Heart left ventricle (tissue), 16 donors: ENCODE measurements at regions of chr3 and their contacts with region 1.

Region 1: DNA sequence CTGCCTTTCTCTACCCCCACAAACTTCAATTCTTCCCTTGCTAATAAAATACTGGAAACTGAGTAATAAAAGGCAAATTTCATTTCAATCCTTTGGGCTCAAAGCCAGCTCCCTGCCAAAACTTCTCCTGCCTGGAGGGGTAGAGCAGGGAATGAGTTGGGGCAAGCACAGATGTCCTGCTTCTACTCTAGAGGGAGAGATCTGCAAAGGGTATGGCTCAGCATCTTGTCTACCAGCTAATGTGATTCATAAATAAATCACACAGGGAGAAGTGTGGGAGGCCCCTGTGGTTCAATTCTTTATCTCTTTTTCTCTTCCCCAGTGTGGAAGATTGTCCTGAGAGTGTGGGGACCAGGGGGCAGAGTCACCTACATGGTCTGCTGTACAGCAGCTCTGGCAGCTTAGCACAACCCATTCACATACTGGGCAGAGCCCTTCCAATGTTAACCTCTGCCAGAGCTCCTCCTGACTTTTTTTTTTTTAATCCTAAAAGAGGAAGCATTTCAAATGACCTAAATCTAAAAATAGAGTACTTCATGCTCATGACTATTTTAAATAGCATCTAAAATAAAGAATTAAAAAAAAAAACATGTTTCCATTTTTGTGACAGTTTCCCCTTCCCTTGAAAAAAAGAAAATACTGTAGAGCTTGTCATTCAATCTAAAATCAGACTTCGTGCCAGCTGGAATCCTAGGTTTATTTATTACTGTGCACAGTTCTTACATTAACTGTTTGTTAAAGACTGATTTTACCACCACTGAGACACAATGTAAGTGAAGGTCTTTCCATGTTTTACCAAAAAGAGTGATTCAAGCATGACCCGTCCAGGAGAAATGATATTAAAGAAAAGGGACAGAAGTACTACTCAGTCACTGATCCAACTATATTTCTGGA is 1083.7 kb upstream of the CFAP20DC start:
- DNase-seq: peak in 2 of 5 donors; percentile 13 to 24
- ATAC-seq: peak; percentile 72 to 91 (median 88)
- H3K4me3 ChIP-seq: no peak overlapping the region
- H3K27ac ChIP-seq: peak overlapping the region in 4 of 12 donors; percentile 7 to 44 (median 24)
- H3K4me1 ChIP-seq: peaks cover 0 to 18% (median 10%) of the 10 kb centered on the region in 12 donors
- H3K27me3 ChIP-seq: no peaks in the 10 kb centered on the region
- CTCF ChIP-seq: no peak
- POLR2A ChIP-seq: no peak

Region 2: DNA sequence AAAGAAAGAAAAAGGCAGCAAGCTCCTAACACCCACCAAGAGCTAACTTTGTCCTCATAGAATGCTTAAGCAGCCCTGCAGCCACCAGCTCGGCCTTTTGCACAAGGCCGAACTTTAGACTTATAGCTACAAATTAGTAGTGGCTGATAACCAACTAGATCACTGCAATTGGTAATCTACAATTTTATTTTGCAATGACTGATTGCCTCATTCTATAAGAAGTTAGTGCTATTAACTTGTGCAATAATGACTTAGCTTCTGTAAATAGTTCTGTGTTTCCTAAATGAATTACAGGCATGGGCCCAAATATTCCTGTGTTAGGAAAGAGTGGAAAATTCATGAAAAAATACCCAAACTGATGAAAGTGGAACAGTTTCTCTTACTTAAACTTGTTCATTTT is 798.9 kb before region 1 on chr3:
- intact Hi-C with region 1: loop called in 1 of 10 experiments (anchors 10 kb)
- DNase-seq: no peak
- ATAC-seq: no peak
- H3K4me3 ChIP-seq: no peak overlapping the region
- H3K27ac ChIP-seq: peak overlapping the region in 1 of 12 donors; percentile 17
- H3K4me1 ChIP-seq: peaks cover 0 to 12% (median 0%) of the 10 kb centered on the region in 12 donors
- H3K27me3 ChIP-seq: no peaks in the 10 kb centered on the region
- CTCF ChIP-seq: no peak
- POLR2A ChIP-seq: no peak